ENCODE measurements at regions of chr7 and their contacts with region 1.

Region 1: DNA sequence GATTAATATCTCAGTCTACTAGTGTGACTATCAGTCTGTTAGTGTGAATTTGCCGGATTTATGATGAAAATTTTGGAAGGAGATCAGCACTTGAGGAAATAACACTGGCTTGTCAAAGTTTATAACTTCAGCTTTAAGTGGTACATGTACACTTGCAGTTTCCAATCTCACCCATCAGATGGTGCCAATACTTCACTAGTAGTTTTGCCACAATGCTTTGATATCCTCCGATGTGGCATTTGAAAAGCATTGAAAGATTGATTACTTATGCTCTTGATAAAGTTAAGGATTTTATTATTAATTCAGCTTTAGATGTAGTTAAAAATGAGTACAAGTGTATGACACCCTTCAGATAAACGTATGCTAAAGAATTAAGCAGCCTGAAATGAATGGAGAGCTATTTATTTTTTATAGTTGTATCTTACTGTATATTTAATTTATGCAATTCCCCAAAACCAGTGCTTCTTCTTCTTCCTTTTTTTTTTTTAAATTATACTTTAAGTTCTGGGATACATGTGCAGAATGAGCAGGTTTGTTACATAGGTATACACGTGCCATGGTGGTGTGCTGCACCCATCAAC is 98.2 kb downstream of the ANLN start:
- DNase-seq: peak; percentile 23
- ATAC-seq: peak; percentile 55
- H3K4me3 Mint-ChIP-seq: no peak overlapping the region
- H3K27ac Mint-ChIP-seq: no peak overlapping the region
- H3K4me1 Mint-ChIP-seq: peaks cover 2% of the 10 kb centered on the region
- H3K27me3 Mint-ChIP-seq: peaks cover 4% of the 10 kb centered on the region

Region 2: DNA sequence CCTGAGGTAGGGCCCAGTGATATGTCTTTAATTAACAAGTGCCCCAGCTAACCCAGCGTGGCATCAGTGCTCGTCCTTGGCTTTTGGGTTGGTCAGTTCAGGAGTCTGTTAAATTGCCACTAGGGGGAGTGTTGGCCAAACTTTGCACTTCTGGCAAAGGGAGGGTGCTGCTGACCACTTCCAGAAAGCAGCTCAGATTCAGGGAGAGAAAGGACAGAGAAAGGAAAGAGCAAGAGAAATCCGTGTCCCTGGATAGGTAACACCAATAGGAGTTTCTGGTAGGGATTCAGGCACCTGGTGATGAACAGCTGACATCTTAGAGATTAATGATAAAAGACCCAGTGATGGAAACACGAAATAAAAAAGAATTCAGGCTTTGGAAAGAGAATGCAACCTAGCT is 479.5 kb after region 1 on chr7:
- CTCF ChIA-PET with region 1: no interaction called
- POLR2A ChIA-PET with region 1: no interaction called
- intact Hi-C with region 1: loop called in 1 of 2 experiments (anchors 10 kb)
- DNase-seq: peak; percentile 10
- ATAC-seq: no peak
- H3K4me3 Mint-ChIP-seq: no peak overlapping the region
- H3K27ac Mint-ChIP-seq: no peak overlapping the region
- H3K4me1 Mint-ChIP-seq: peaks cover 54% of the 10 kb centered on the region
- H3K27me3 Mint-ChIP-seq: no peaks in the 10 kb centered on the region

Region 3: GRCh38 chr7:37201003-37201875 is 713.4 kb after region 1 on chr7:
- CTCF ChIA-PET with region 1: interaction called, 9 read pairs
- POLR2A ChIA-PET with region 1: no interaction called
- intact Hi-C with region 1: loop called (anchors 1 kb)
- DNase-seq: peak; percentile 73
- ATAC-seq: no peak
- H3K4me3 Mint-ChIP-seq: no peak overlapping the region
- H3K27ac Mint-ChIP-seq: no peak overlapping the region
- H3K4me1 Mint-ChIP-seq: peaks cover 7% of the 10 kb centered on the region
- H3K27me3 Mint-ChIP-seq: no peaks in the 10 kb centered on the region